Adrenal gland (tissue), 19 donors: ENCODE measurements at regions of chr15 and their contacts with region 1.

Region 1: GRCh38 chr15:70355275-70355795 is 257.6 kb upstream of the TLE3 start:
- DNase-seq: no peak
- H3K4me3 ChIP-seq: no peak overlapping the region
- H3K27ac ChIP-seq: no peak overlapping the region
- H3K4me1 ChIP-seq: no peaks in the 10 kb centered on the region
- H3K27me3 ChIP-seq: no peaks in the 10 kb centered on the region
- CTCF ChIP-seq: no peak
- POLR2A ChIP-seq: no peak

Region 2: GRCh38 chr15:69735121-69735520 is 620.2 kb before region 1 on chr15:
- intact Hi-C with region 1: loop called in 1 of 2 experiments (anchors 5 kb)
- DNase-seq: peak in 1 of 7 donors; percentile 61
- H3K4me3 ChIP-seq: no peak overlapping the region
- H3K27ac ChIP-seq: no peak overlapping the region
- H3K4me1 ChIP-seq: no peaks in the 10 kb centered on the region
- H3K27me3 ChIP-seq: no peaks in the 10 kb centered on the region
- CTCF ChIP-seq: no peak
- POLR2A ChIP-seq: no peak